Activated CD4-positive, alpha-beta memory T cell treated with anti-CD3 and anti-CD28 coated beads for 36 hours (primary cell): ENCODE measurements at regions of chr5 and their contacts with region 1.

Region 1: DNA sequence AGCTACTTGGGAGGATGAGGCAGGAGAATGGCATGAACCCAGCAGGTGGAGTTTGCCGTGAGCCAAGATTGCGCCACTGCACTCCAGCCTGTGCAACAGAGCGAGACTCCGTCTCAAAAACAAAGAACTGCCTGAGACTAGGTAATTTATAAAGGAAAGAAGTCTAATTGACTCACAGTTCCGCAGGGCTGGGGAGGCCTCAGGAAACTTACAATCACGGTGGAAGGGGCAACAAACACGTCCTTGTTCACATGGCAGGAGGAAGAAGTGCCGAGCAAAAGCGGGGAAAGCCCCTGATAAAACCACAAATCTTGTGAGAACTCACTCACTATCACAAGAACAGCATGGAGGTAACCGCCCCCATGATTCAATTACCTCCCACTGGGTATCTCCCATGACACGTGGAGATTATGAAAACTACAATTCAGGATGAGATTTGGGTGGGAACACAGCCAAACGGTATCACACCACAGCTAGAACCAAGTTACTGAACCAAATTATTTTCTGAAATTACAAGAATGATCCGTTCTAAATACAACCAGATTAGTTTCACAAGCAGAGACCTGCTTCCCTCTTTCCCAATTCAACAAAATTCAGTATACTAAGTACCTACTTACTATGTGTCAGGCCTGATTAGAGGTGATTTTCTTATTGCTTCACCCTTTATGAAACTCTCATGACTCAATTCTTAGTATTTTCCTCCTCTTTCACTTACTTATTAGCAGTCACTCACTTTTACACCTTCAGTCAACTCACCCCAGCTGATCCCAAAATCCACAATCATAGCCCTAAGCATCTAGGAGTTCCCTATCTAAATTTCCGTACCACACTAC is 8.4 kb downstream of the UBTD2 start:
- DNase-seq: peak; percentile 82
- H3K4me3 Mint-ChIP-seq: no peak overlapping the region
- H3K27ac Mint-ChIP-seq: peak overlapping the region; percentile 36
- H3K4me1 Mint-ChIP-seq: peaks cover 42% of the 10 kb centered on the region
- H3K27me3 Mint-ChIP-seq: no peaks in the 10 kb centered on the region

Region 2: DNA sequence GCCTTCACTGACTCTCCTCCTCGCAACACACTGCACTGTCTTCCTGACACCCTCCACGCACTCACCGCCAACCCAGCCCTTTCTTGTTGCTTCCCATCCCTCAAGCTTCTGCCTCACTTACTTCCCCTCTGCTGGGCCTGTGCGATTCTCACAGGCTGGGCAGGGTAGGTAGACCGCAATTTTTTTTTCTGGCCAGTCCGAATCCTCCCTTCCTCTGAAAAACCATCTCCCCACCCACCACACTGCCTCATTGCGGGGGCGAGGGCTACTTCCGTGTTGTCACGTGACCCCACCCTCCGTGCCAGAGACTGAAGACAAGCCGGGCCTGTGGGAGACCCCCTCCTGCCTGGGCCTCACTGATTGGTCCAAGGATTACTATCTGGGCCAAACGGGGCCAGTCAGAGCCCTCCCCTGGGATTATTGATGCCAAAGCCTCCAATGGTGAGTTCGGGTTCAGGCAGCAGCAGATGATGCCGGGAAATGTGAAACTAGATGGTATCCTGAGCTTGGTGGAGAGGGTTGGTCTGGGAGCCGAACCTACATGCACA is 160.2 kb before region 1 on chr5:
- CTCF ChIA-PET with region 1: interaction called, 4 read pairs
- POLR2A ChIA-PET with region 1: no interaction called
- intact Hi-C with region 1: loop called (anchors 2 kb)
- DNase-seq: peak; percentile 95
- H3K4me3 Mint-ChIP-seq: peak overlapping the region; percentile 83
- H3K27ac Mint-ChIP-seq: peak overlapping the region; percentile 99
- H3K4me1 Mint-ChIP-seq: peaks cover 73% of the 10 kb centered on the region
- H3K27me3 Mint-ChIP-seq: no peaks in the 10 kb centered on the region

Region 3: GRCh38 chr5:172216345-172216744 is 58.8 kb before region 1 on chr5:
- CTCF ChIA-PET with region 1: no interaction called
- POLR2A ChIA-PET with region 1: no interaction called
- intact Hi-C with region 1: no loop called
- DNase-seq: no peak
- H3K4me3 Mint-ChIP-seq: no peak overlapping the region
- H3K27ac Mint-ChIP-seq: no peak overlapping the region
- H3K4me1 Mint-ChIP-seq: no peaks in the 10 kb centered on the region
- H3K27me3 Mint-ChIP-seq: no peaks in the 10 kb centered on the region

Region 4: DNA sequence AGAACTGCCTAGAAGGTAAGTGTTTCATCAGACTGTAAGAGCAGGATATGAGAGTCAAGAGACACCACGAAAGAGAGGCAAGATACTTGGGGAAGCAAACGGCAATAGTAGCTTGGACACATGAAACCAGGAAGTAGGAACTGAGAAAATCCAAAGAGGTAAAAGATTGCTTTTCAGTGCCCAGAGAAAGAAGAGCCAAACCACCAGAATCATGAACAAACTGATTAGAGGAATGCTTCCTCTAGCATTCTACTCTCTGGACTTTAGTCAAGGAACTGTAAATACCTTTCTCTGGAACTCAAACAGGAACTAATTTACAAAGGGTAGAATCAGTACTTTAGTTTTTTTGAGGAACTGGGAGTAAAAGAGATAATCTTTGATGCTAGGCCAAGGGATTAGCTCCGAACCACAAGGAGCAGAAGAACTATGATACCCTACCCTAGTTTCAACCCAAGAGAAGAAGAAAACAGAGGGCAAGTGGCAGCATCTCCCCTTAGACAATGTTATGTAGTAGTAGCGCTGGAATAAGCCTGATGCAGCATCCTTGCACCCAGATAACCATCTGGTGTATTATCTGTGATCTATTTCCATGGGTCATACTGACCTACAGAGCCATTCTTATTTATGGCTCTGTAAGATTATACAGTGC is 39.9 kb before region 1 on chr5:
- CTCF ChIA-PET with region 1: interaction called, 3 read pairs
- POLR2A ChIA-PET with region 1: interaction called, 7 read pairs
- intact Hi-C with region 1: loop called (anchors 5 kb)
- DNase-seq: no peak
- H3K4me3 Mint-ChIP-seq: no peak overlapping the region
- H3K27ac Mint-ChIP-seq: no peak overlapping the region
- H3K4me1 Mint-ChIP-seq: peaks cover 44% of the 10 kb centered on the region
- H3K27me3 Mint-ChIP-seq: no peaks in the 10 kb centered on the region

Region 5: GRCh38 chr5:172293054-172293744 is 18.1 kb after region 1 on chr5:
- CTCF ChIA-PET with region 1: interaction called, 6 read pairs
- POLR2A ChIA-PET with region 1: no interaction called
- intact Hi-C with region 1: loop called (anchors 2 kb)
- DNase-seq: peak; percentile 72
- H3K4me3 Mint-ChIP-seq: no peak overlapping the region
- H3K27ac Mint-ChIP-seq: no peak overlapping the region
- H3K4me1 Mint-ChIP-seq: no peaks in the 10 kb centered on the region
- H3K27me3 Mint-ChIP-seq: peaks cover 4% of the 10 kb centered on the region